ENCODE measurements at regions of chr1 and their contacts with region 1.

Region 1: DNA sequence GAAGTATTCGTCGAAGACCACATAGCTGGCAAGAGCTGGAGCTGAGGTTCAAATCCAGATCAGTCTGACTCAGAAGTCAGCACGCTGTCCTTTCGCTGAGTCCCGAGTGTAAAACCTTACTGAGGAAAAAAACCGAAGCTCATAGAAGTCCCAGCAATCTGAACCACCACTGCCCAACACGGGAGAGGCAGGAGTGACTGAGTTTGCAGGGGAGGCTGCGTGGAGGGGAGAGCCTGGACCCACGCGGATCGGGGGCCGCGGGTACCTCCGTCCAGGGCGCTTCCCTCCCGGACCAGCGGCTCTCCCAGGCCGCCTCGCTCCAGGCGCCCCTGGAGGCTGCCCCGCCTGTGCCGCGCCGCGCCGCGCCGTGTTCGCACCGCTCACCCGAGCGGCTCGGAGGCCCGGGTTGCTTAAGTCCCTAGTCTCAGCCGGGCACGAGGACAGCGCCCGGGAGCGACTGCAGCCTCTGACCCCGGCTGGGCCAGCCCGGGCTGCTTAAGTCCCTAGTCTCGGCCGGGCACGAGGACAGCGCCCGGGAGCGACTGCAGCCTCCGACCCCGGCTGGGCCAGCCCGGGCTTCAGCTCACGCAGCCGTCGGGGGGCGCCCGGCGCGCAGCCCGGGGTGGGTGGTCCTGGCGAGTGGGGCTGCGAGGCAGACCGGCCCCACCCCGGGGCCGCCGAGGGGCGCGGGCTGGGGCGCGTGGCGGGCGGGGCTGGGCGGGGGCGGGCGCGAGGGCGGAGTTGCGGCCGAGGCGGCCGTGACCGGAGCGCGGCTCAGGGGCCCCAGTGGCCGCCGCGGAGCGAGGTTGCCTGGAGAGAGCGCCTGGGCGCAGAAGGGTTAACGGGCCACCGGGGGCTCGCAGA is at the start of gene ADAMTSL4:
- DNase-seq: peak in 1 of 2 donors; percentile 87
- H3K4me3 ChIP-seq: peak within 1 kb of the TSS; percentile 70 to 88
- H3K27ac ChIP-seq: peak within 1 kb of the TSS; percentile 97 to 100
- H3K4me1 ChIP-seq: peaks cover 26 to 43% of the 10 kb centered on the region in 2 donors
- H3K27me3 ChIP-seq: no peaks in the 10 kb centered on the region
- CTCF ChIP-seq: peak in 1 of 3 experiments; percentile 33
- total RNA-seq, gene ADAMTSL4: 85.3 TPM

Region 2: GRCh38 chr1:150464422-150464826 is 84.4 kb before region 1 on chr1:
- intact Hi-C with region 1: loop called (anchors 5 kb)
- DNase-seq: no peak
- H3K4me3 ChIP-seq: no peak overlapping the region
- H3K27ac ChIP-seq: no peak overlapping the region
- H3K4me1 ChIP-seq: no peaks in the 10 kb centered on the region
- H3K27me3 ChIP-seq: no peaks in the 10 kb centered on the region
- CTCF ChIP-seq: peak; percentile 70 to 82 (median 77)

Region 3: GRCh38 chr1:150486964-150487762 is 61.7 kb before region 1 on chr1 and contains the start of gene TARS2:
- intact Hi-C with region 1: loop called (anchors 2 kb)
- DNase-seq: peak; percentile 91 to 99
- H3K4me3 ChIP-seq: peak within 1 kb of the TSS; percentile 70 to 73
- H3K27ac ChIP-seq: peak within 1 kb of the TSS; percentile 33 to 73
- H3K4me1 ChIP-seq: peaks cover 0 to 6% of the 10 kb centered on the region in 2 donors
- H3K27me3 ChIP-seq: no peaks in the 10 kb centered on the region
- CTCF ChIP-seq: peak; percentile 6 to 44 (median 27)
- total RNA-seq, gene TARS2: 10.9 TPM

Region 4: GRCh38 chr1:150532868-150533302 is 16.0 kb before region 1 on chr1:
- intact Hi-C with region 1: loop called (anchors 1 kb)
- DNase-seq: no peak
- H3K4me3 ChIP-seq: peak overlapping the region; percentile 12 to 31
- H3K27ac ChIP-seq: peak overlapping the region; percentile 89 to 92
- H3K4me1 ChIP-seq: peaks cover 20 to 25% of the 10 kb centered on the region in 2 donors
- H3K27me3 ChIP-seq: no peaks in the 10 kb centered on the region
- CTCF ChIP-seq: no peak

Region 5: GRCh38 chr1:150979092-150980056 is 430.5 kb after region 1 on chr1:
- intact Hi-C with region 1: loop called (anchors 10 kb)
- DNase-seq: peak; percentile 42 to 96
- H3K4me3 ChIP-seq: peak overlapping the region in 1 of 2 donors; percentile 50
- H3K27ac ChIP-seq: peak overlapping the region; percentile 95 to 99
- H3K4me1 ChIP-seq: peaks cover 11 to 34% of the 10 kb centered on the region in 2 donors
- H3K27me3 ChIP-seq: no peaks in the 10 kb centered on the region
- CTCF ChIP-seq: peak; percentile 99

Region 6: GRCh38 chr1:152096121-152096865 is 1547.4 kb after region 1 on chr1:
- intact Hi-C with region 1: no loop called
- DNase-seq: no peak
- H3K4me3 ChIP-seq: no peak overlapping the region
- H3K27ac ChIP-seq: no peak overlapping the region
- H3K4me1 ChIP-seq: no peaks in the 10 kb centered on the region
- H3K27me3 ChIP-seq: no peaks in the 10 kb centered on the region
- CTCF ChIP-seq: no peak

Measured in ascending aorta (tissue), 2 donors.